Activated CD4-positive, alpha-beta memory T cell treated with anti-CD3 and anti-CD28 coated beads for 36 hours (primary cell): ENCODE measurements at regions of chr9 and their contacts with region 1.

Region 1: DNA sequence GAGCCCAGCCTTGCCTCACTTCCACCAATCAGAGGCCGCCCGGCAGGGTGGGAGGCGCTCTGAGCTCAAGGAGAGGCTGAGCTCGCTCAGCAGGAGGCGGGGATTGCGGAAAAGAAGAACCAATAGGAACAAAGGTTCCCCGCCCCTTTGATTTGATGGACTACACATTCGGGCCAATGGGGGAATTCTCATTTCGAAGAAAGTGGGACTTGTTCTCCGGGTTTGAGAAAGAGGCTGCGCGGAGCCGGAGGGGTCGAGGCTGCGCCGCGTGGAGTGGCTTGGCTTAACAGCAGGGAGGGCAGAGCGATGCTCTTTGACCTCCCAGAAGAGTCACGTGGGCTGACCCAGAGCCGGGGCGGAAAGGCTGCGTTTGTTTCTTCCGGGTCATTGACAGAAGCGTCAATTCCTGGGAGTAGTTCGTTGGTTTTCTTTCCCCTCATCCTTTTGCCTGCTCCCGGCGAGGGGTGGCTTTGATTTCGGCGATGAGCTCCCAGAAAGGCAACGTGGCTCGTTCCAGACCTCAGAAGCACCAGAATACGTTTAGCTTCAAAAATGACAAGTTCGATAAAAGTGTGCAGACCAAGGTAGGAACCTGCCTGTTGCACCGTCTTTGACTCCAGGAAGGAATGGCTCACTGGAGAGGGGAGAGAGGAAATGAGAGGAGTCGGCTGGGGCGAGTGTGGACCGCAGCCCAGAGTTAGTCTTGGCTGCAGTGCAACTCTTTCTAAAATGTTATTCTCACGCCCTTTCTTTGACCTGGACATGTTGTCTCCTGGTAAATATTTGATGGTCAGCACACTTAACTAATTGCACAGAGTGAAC is at the start of gene C9orf85:
- DNase-seq: peak; percentile 98
- H3K4me3 Mint-ChIP-seq: peak within 1 kb of the TSS; percentile 97
- H3K27ac Mint-ChIP-seq: peak within 1 kb of the TSS; percentile 92
- H3K4me1 Mint-ChIP-seq: peaks cover 52% of the 10 kb centered on the region
- H3K27me3 Mint-ChIP-seq: no peaks in the 10 kb centered on the region
- total RNA-seq, gene C9orf85: 7.3 to 7.5 TPM

Region 2: DNA sequence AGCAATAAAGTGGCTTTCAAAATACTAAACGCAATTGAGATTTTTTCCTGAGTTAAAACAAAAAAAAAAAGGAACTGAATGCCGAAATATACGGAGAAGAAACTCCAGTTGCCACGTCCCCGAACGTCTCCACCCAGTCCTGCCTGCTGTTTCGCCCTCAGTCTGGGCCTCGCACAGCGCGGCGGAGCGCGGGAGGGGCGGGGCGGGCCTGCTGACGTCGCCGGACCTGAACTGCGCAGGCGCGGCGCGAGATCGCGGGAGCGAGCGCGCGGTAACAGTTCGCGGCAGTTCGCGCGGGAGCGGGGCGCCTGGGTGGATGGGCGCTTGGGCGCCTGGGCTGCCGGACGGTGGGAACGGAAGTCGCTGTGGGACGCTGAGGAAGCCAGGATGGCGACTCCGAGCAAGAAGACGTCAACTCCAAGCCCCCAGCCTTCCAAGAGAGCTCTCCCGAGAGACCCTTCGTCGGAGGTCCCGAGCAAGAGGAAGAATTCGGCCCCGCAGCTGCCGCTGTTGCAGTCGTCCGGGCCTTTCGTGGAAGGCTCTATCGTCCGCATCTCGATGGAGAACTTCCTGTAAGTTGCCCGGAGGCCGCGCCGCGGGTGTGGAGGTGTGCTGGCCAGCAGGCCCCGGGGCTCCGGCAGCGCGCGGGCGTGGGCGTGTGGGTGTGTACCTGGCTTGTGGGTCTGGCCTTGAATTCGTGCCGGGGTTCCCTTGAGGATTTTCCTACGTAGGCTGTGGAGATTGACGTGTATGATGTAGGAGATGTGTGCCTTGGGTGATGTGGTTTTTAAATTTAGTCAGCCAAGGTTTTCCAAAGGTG is 1652.6 kb before region 1 on chr9 and contains the start of gene SMC5:
- CTCF ChIA-PET with region 1: no interaction called
- POLR2A ChIA-PET with region 1: no interaction called
- intact Hi-C with region 1: loop called (anchors 10 kb)
- DNase-seq: peak; percentile 92
- H3K4me3 Mint-ChIP-seq: peak within 1 kb of the TSS; percentile 95
- H3K27ac Mint-ChIP-seq: peak within 1 kb of the TSS; percentile 88
- H3K4me1 Mint-ChIP-seq: peaks cover 47% of the 10 kb centered on the region
- H3K27me3 Mint-ChIP-seq: no peaks in the 10 kb centered on the region
- total RNA-seq, gene SMC5: 32.0 to 34.1 TPM

Region 3: DNA sequence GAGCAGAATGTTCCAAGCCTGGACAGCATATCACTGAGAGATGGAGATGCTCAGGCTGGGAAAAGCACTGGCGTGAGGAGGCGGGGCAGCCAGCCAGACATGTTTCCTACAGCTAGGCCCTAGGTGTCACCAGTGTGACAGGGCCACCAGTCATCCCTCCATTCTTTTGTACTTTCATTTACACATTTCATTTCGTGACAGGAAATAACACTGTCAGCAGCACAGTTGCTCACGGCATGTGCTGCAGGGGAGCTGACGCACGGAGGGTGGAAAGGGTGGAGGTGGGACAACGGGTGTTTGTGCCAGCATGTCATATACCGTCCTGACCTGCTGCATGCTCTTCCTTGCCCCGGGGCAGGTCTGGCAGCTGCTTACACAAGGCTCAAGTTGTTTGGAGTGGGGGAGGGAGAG is 128.3 kb before region 1 on chr9:
- CTCF ChIA-PET with region 1: interaction called, 4 read pairs
- POLR2A ChIA-PET with region 1: interaction called, 8 read pairs
- intact Hi-C with region 1: loop called (anchors 1 kb)
- DNase-seq: peak; percentile 94
- H3K4me3 Mint-ChIP-seq: peak overlapping the region; percentile 71
- H3K27ac Mint-ChIP-seq: peak overlapping the region; percentile 96
- H3K4me1 Mint-ChIP-seq: peaks cover 43% of the 10 kb centered on the region
- H3K27me3 Mint-ChIP-seq: no peaks in the 10 kb centered on the region

Region 4: DNA sequence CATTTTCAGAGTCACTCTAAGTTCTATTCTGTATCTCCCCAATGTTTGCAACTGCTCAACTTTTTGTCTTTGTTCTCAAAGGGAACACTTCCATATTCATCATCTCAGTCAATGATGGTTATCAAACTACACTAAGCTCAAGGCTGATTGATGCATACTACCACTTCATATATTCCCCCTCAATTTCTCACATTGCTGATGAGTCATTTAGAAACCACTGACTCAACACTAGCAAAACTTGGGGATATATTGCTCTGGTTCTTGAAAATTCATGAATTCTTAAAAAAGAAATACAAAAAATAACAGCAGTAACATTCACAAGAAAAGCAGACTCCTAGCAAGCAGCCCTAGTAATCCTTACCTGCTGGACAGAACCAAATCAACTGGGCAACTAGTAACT is 52.7 kb before region 1 on chr9:
- CTCF ChIA-PET with region 1: no interaction called
- POLR2A ChIA-PET with region 1: no interaction called
- intact Hi-C with region 1: loop called (anchors 1 kb)
- DNase-seq: no peak
- H3K4me3 Mint-ChIP-seq: no peak overlapping the region
- H3K27ac Mint-ChIP-seq: peak overlapping the region; percentile 0
- H3K4me1 Mint-ChIP-seq: peaks cover 8% of the 10 kb centered on the region
- H3K27me3 Mint-ChIP-seq: no peaks in the 10 kb centered on the region

Region 5: DNA sequence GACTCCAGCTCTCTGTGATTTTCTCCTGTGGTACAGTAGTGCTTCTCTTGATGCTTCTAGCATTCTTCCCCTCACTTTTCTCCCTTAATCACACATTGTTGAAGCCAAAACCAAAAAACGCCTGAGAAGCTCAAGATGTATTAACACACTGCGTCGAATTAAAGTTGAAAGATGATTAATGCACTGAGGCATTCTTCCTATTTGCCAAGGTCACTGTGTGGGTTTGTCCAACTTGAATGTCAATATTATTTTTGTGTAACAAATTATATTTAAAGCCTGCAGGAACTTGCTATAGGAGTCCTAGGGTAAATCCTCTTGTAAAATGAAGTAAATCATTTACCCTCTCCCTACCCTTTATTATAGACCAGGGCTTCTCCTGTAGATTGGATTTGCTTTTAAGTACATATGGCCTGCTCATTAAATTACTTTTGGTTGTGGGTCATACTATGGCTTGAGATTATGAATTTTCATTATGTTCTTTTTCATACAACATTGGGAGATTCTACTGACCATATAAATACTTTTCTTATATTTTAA is 305.9 kb after region 1 on chr9:
- CTCF ChIA-PET with region 1: no interaction called
- POLR2A ChIA-PET with region 1: no interaction called
- intact Hi-C with region 1: no loop called
- DNase-seq: no peak
- H3K4me3 Mint-ChIP-seq: no peak overlapping the region
- H3K27ac Mint-ChIP-seq: no peak overlapping the region
- H3K4me1 Mint-ChIP-seq: no peaks in the 10 kb centered on the region
- H3K27me3 Mint-ChIP-seq: no peaks in the 10 kb centered on the region

Region 6: DNA sequence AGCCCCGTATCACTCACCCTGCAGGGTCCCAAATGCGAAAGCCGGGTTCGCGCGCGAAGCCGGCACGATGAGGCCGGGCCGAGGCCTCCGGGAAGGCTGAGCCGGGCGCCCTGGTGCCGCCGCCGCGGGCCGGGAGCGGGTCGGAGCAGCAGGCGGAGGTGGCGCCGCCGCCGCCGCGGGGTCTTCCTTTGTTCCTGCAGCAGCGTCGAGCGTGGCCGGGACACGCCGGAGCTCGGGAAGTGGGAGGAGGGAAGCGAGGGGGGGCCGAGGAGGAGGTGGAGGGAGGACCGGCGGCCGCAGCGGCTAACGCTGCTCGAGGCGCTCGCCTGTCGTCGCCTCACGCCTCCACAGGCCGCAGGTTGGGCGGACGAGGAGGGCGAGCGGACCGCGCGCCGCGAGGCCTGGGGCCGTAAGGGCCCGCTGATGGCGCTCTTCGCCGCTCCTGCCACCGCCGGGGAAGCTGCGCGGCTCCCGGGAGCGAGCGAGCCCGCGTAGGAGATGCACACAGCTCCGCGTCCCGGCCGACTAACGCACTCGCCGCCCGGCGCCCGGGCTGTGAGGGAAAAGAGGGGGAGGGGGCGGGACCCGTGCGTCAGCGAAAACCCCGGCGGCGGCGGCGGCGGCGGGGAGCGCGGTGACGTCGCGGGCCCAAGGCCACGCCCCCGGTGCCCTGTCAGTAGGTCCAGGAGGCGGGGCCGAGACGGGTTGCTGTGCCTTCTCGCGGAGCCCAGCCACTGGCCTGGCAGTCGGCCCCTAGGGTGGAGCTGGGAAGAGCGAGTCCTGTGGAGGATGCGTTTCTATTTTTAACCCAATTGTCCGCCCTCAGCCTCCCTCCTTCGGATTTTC is 453.4 kb after region 1 on chr9 and contains the start of gene ZFAND5:
- CTCF ChIA-PET with region 1: no interaction called
- POLR2A ChIA-PET with region 1: no interaction called
- intact Hi-C with region 1: loop called (anchors 2 kb)
- DNase-seq: peak; percentile 95
- H3K4me3 Mint-ChIP-seq: peak within 1 kb of the TSS; percentile 84
- H3K27ac Mint-ChIP-seq: peak within 1 kb of the TSS; percentile 96
- H3K4me1 Mint-ChIP-seq: peaks cover 35% of the 10 kb centered on the region
- H3K27me3 Mint-ChIP-seq: no peaks in the 10 kb centered on the region
- total RNA-seq, gene ZFAND5: 92.4 to 93.8 TPM

Region 7: GRCh38 chr9:73132034-73132776 is 1220.7 kb after region 1 on chr9:
- CTCF ChIA-PET with region 1: no interaction called
- POLR2A ChIA-PET with region 1: no interaction called
- intact Hi-C with region 1: loop called (anchors 10 kb)
- DNase-seq: peak; percentile 80
- H3K4me3 Mint-ChIP-seq: peak overlapping the region; percentile 78
- H3K27ac Mint-ChIP-seq: peak overlapping the region; percentile 88
- H3K4me1 Mint-ChIP-seq: peaks cover 35% of the 10 kb centered on the region
- H3K27me3 Mint-ChIP-seq: no peaks in the 10 kb centered on the region